Psoas muscle (tissue), 8 donors: ENCODE measurements at regions of chr2 and their contacts with region 1.

Region 1: DNA sequence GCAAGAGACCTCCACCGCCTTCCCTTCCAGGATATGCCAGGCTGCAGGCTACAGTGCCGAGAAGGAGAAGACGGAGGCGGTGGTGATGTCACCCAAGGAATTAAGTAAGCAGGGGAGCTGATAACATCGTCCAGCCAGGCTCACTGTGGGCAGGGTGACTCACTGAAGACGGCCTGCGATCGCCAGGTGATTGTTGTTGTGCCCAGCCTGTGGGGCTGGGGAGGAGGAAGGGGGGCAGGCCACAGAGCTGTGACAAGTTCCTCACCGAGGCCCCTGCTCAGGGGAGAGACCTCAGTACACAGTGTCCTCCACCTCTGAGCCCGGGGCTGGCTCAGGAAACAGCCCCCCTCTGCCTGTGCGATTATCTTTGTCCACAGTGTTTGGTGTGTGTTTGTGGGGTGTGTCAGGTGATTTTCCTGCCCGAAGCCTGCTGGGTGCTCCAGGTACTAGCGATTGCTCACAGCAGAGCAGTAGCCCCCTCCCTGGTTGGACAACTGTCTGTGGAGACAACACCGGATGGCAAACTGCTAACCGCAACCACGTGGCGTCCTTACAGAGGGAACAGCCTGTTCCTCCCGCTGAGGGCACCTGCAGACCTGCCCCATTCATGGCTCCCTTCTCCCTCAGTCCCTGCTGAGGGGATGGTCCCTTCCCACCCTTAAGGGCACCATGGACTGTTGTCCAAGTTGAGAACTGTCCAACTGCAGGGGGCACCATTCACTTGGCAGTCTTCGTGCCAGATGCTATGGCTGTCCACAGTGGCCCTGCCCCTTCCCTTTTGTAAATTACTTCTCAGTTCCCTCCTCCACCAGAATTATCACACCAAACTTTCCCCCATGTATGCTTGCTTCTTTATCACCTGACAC is 95.1 kb downstream of the ZFP36L2 start:
- DNase-seq: peak; percentile 77 to 84
- ATAC-seq: peak; percentile 77 to 84 (median 82)
- H3K4me3 ChIP-seq: no peak overlapping the region
- H3K27ac ChIP-seq: peak overlapping the region; percentile 72
- H3K4me1 ChIP-seq: peaks cover 28% of the 10 kb centered on the region
- H3K27me3 ChIP-seq: no peaks in the 10 kb centered on the region
- CTCF ChIP-seq: peak; percentile 38

Region 2: DNA sequence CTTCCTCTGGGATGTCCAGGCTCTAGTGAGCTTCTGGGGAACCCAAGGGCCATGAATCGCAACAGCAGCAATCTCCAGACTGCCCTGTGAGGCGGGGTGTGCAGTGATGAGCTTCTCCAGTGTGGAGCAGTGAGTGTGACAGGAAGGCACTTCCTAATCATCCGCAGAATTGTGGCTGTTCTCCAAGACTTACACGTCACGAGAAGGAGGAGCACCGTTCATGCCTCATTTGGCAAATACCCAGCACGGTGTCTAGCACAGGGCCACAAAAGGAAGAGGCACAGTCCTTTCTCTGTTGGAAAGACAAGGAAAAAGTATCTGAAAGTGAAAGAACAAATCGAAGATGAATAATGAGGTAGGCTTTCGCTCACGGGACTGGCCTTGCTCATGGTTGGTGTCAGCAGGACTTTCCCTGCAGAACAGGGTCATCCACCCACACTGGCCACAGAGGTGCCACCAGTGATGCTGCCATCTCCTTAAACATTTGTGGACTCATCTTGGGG is 213.8 kb before region 1 on chr2:
- intact Hi-C with region 1: no loop called
- DNase-seq: peak in 1 of 2 donors; percentile 52
- ATAC-seq: peak in 3 of 4 donors; percentile 45 to 65 (median 50)
- H3K4me3 ChIP-seq: no peak overlapping the region
- H3K27ac ChIP-seq: peak overlapping the region; percentile 9
- H3K4me1 ChIP-seq: no peaks in the 10 kb centered on the region
- H3K27me3 ChIP-seq: no peaks in the 10 kb centered on the region
- CTCF ChIP-seq: no peak

Region 3: GRCh38 chr2:42944779-42945415 is 186.4 kb before region 1 on chr2:
- intact Hi-C with region 1: loop called in 1 of 2 experiments (anchors 5 kb)
- DNase-seq: no peak
- ATAC-seq: no peak
- H3K4me3 ChIP-seq: no peak overlapping the region
- H3K27ac ChIP-seq: no peak overlapping the region
- H3K4me1 ChIP-seq: peaks cover 7% of the 10 kb centered on the region
- H3K27me3 ChIP-seq: no peaks in the 10 kb centered on the region
- CTCF ChIP-seq: no peak

Region 4: DNA sequence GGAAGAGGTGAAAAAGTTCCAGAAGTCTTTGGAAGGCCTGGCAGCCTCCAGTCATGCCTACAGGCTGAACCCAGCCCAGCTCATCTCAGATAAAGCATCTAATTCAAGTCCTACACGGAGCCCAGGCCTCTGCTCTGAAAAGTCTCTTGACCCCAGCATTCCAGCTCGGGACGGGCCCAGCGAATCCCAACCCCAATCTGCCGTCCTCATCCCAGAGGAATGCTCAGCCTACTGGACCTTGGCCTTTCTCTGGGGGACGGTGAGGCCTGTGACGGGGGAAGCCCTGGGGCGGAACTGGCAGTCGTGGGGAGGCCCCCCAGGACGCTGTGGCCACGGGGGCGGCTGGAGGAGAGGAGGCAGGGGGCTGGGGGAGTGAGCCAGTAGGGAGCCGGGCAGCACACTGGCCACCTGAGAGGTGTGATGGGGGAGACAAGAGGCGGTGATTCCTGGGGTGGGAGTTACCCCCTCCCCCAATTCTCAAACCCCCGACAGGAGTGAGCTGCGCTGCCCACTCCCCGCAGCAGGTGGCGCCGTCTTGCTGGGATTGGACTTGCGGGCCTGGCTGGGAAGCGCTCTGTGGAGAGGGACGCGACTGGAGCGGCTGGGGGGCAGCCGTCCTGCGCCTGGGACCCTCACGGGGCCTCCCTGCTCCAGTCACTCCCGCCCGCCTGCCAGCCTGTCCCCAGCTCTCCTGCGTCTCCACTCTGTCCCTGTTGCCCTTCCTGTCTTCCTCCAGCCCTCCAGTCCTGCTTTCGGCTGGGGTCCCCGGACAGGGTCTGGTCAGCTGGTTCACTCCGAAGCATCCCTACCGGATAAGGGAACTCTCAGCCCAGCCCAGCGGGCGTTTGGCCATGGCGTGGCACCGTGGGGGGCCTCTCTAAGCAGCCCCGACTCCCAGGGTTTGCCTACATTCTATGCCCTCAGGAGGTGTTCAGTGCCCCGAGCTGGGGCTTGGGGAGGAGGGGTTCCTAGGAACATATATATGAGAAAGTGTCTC is 156.2 kb before region 1 on chr2:
- intact Hi-C with region 1: loop called in 1 of 2 experiments (anchors 10 kb)
- DNase-seq: peak; percentile 83 to 90
- ATAC-seq: peak; percentile 90 to 96 (median 92)
- H3K4me3 ChIP-seq: peak overlapping the region; percentile 57
- H3K27ac ChIP-seq: no peak overlapping the region
- H3K4me1 ChIP-seq: peaks cover 4% of the 10 kb centered on the region
- H3K27me3 ChIP-seq: no peaks in the 10 kb centered on the region
- CTCF ChIP-seq: peak; percentile 89

Region 5: GRCh38 chr2:43149482-43150107 is 18.3 kb after region 1 on chr2:
- intact Hi-C with region 1: no loop called
- DNase-seq: no peak
- ATAC-seq: no peak
- H3K4me3 ChIP-seq: no peak overlapping the region
- H3K27ac ChIP-seq: no peak overlapping the region
- H3K4me1 ChIP-seq: peaks cover 8% of the 10 kb centered on the region
- H3K27me3 ChIP-seq: no peaks in the 10 kb centered on the region
- CTCF ChIP-seq: no peak